ENCODE measurements at regions of chr6 and their contacts with region 1.

Region 1: GRCh38 chr6:150395398-150396009 is 26.7 kb downstream of the IYD start:
- H3K4me3 ChIP-seq: no peak overlapping the region
- H3K27ac ChIP-seq: no peak overlapping the region
- H3K4me1 ChIP-seq: no peaks in the 10 kb centered on the region
- CTCF ChIP-seq: peak; percentile 47; the same call in 1 of the 2 replicates

Region 2: GRCh38 chr6:150068720-150069648 is 326.5 kb before region 1 on chr6 and contains the start of gene ULBP3:
- CTCF ChIA-PET with region 1: interaction called, 29 read pairs
- POLR2A ChIA-PET with region 1: interaction called, 3 read pairs
- H3K4me3 ChIP-seq: peak within 1 kb of the TSS; percentile 70
- H3K27ac ChIP-seq: peak within 1 kb of the TSS; percentile 65
- H3K4me1 ChIP-seq: peaks cover 6% of the 10 kb centered on the region; the same call in 1 of the 2 replicates
- CTCF ChIP-seq: peak; percentile 65

Region 3: GRCh38 chr6:150343434-150343833 is 52.1 kb before region 1 on chr6:
- CTCF ChIA-PET with region 1: interaction called, 11 read pairs
- POLR2A ChIA-PET with region 1: no interaction called
- H3K4me3 ChIP-seq: no peak overlapping the region
- H3K27ac ChIP-seq: no peak overlapping the region
- H3K4me1 ChIP-seq: no peaks in the 10 kb centered on the region; the same call in 1 of the 2 replicates
- CTCF ChIP-seq: no peak

Region 4: DNA sequence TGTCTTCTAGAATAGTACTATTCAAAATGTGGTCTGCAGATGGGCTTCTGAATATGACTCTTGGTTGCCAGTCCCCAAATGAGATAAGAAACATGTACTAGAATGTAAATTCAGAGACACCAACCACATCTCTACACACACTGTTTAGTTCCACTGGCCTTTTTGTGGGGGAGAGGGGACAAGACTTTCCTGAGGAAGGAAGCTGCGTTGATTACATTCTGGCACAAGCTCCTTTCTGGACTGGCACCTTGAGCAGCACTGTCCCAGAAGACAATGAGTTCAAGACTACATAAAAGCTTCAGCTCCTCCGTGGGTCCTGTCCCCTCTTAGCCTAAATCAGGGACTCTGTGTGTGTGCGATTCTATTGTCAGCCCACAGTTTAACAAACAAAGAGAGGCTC is 33.6 kb before region 1 on chr6:
- CTCF ChIA-PET with region 1: interaction called, 26 read pairs
- POLR2A ChIA-PET with region 1: no interaction called
- H3K4me3 ChIP-seq: no peak overlapping the region
- H3K27ac ChIP-seq: no peak overlapping the region
- H3K4me1 ChIP-seq: peaks cover 8% of the 10 kb centered on the region
- CTCF ChIP-seq: no peak

Region 5: GRCh38 chr6:150409576-150410066 is 14.1 kb after region 1 on chr6:
- CTCF ChIA-PET with region 1: interaction called, 38 read pairs
- POLR2A ChIA-PET with region 1: interaction called, 5 read pairs
- H3K4me3 ChIP-seq: no peak overlapping the region
- H3K27ac ChIP-seq: peak overlapping the region; percentile 44; the same call in 1 of the 2 replicates
- H3K4me1 ChIP-seq: peaks cover 26% of the 10 kb centered on the region
- CTCF ChIP-seq: no peak

Region 6: GRCh38 chr6:151451950-151452749 is 1056.6 kb after region 1 on chr6 and contains the start of gene RMND1:
- CTCF ChIA-PET with region 1: no interaction called
- POLR2A ChIA-PET with region 1: interaction called, 10 read pairs
- H3K4me3 ChIP-seq: peak within 1 kb of the TSS; percentile 97
- H3K27ac ChIP-seq: peak within 1 kb of the TSS; percentile 85
- H3K4me1 ChIP-seq: peaks cover 4% of the 10 kb centered on the region; the same call in 1 of the 2 replicates
- CTCF ChIP-seq: no peak

Measured in HEK293 (cell line).